ENCODE measurements at regions of chr19 and their contacts with region 1.

Region 1: DNA sequence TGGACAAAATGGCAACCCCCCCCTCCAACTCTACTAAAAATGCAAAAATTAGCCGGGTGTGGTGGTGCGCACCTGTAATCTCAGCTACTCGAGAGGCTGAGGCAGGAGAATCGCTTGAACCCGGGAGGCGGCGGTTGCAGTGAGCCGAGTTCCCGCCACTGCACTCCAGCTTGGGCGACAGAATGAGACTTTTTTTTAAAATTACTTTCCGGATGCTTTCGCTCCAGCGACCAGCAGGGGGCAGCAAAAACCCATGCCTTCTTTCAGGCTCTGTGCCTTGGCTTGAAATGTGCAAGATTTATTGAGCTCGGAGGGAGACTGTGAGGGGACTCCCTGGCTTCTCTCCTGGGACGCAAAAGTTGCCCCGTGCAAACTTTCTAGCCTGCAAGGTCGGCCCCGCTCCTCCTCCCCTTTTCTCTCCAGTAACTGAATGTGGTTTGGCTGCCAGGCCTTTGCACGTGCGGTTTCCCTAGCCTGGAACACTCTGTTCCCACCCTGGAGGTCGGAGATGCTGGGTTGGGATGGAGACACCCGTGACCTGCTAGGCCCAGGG is 61.4 kb upstream of the NFIC start:
- DNase-seq: peak; percentile 71
- H3K4me3 ChIP-seq: no peak overlapping the region
- H3K27ac ChIP-seq: no peak overlapping the region
- H3K4me1 ChIP-seq: no peaks in the 10 kb centered on the region
- H3K27me3 ChIP-seq: no peaks in the 10 kb centered on the region
- CTCF ChIP-seq: peak; percentile 66 to 77
- POLR2A ChIP-seq: no peak

Region 2: GRCh38 chr19:3193256-3194105 is 111.5 kb before region 1 on chr19:
- CTCF ChIA-PET with region 1: no interaction called
- POLR2A ChIA-PET with region 1: no interaction called
- dilution Hi-C with region 1: no loop called
- intact Hi-C with region 1: no loop called
- DNase-seq: no peak
- H3K4me3 ChIP-seq: no peak overlapping the region
- H3K27ac ChIP-seq: no peak overlapping the region
- H3K4me1 ChIP-seq: no peaks in the 10 kb centered on the region
- H3K27me3 ChIP-seq: no peaks in the 10 kb centered on the region
- CTCF ChIP-seq: no peak
- POLR2A ChIP-seq: no peak

Region 3: DNA sequence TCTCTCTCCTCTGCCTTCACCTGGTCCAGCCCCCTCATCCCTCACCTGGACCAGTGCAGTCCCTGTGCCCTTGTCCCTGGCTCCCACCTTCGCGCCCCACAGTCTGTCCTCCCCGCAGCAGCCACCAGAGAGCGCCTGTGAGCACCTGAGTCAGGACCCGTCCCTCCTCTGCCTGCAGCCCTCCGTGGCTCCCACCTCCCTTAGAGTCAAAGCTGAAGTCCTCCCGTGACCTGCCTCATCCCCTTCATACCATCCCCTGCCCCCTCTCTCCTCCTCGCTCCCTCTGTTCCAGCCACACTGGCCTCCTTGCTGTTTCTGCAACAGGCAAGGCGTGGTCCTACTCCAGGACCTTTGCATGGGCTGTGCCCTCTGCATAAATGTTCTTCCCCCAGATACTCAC is 70.1 kb before region 1 on chr19:
- CTCF ChIA-PET with region 1: interaction called, 3 read pairs
- POLR2A ChIA-PET with region 1: interaction called, 14 read pairs
- dilution Hi-C with region 1: no loop called
- intact Hi-C with region 1: no loop called
- DNase-seq: no peak
- H3K4me3 ChIP-seq: no peak overlapping the region
- H3K27ac ChIP-seq: no peak overlapping the region
- H3K4me1 ChIP-seq: no peaks in the 10 kb centered on the region
- H3K27me3 ChIP-seq: peaks cover 0 to 2% of the 10 kb centered on the region in 2 experiments
- CTCF ChIP-seq: peak in 1 of 2 donors; percentile 19
- POLR2A ChIP-seq: no peak

Region 4: DNA sequence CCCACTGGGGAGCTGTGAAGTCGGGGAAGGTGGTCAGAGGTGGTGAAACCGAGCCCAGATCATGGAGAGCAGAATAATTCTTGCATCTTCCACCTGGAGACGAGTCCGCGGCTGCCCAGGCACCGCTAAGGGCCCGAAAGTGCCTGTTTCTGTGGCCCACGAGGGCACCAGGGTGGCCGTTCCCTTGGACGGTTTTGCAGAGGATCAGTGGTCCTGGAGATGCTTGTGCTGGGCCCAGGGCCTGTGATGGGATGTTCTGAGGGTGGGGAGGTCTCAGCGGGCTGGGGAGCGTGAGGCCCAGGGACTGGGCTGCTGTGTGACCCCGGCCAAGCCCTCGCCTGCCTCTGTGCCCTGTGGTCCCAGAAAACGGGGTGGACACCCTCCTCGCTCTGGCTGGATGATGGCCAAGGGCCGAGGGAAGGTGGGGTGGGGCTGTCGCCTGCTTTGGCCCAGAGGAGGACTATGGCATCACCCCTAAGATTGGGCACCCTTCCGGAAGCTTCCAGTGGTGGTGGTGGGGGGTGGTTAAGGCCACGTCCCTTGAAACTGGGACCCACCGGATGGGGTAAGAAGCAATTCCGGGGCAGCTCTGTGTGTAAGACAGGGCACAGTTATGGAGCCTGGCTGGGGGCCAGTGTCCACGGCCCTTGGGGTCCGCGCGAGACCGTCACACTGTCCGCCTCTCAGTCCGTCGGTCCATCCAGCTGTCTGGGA is 10.2 kb after region 1 on chr19:
- CTCF ChIA-PET with region 1: interaction called, 10 read pairs
- POLR2A ChIA-PET with region 1: no interaction called
- dilution Hi-C with region 1: no loop called
- intact Hi-C with region 1: no loop called
- DNase-seq: no peak
- H3K4me3 ChIP-seq: no peak overlapping the region
- H3K27ac ChIP-seq: no peak overlapping the region
- H3K4me1 ChIP-seq: no peaks in the 10 kb centered on the region
- H3K27me3 ChIP-seq: peaks cover 0 to 4% of the 10 kb centered on the region in 2 experiments
- CTCF ChIP-seq: no peak
- POLR2A ChIP-seq: no peak

Region 5: DNA sequence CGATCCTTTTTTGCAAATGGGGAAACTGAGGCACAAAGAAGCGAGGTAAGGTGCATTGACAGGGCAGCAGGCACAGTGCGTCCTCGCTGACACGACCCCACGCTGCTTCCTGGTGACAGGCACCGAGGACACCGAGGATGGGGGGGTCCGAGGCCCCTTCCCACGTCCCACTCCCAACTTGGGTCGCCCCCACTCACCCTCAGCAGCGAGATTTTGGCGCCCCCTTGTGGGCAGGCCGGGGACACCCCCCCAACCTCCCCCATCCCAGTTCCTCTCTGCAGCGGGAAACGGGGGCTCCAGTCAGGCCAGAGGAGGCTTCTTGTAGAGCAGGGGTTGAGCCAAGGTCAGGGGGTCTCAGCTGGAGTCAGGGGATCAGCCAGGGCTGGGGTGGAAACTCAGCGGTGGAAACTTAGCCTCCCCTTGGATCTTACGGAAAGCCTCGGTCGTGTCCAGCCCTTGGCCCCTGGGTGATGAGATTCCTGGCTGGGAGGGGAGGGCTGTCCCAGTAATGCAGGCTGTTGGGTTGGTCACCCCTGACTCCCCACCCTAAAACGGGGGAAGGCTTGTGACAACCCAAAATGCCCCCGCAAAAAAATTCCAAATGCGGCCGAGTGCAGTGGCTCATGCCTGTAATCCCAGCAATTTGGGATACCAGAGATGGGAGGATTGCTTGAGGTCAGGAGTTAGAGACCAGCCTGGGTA is 167.2 kb after region 1 on chr19:
- CTCF ChIA-PET with region 1: interaction called, 34 read pairs
- POLR2A ChIA-PET with region 1: no interaction called
- dilution Hi-C with region 1: no loop called
- intact Hi-C with region 1: loop called (anchors 5 kb)
- DNase-seq: peak; percentile 29
- H3K4me3 ChIP-seq: no peak overlapping the region
- H3K27ac ChIP-seq: no peak overlapping the region
- H3K4me1 ChIP-seq: no peaks in the 10 kb centered on the region
- H3K27me3 ChIP-seq: no peaks in the 10 kb centered on the region
- CTCF ChIP-seq: peak; percentile 83 to 90
- POLR2A ChIP-seq: no peak

Region 6: DNA sequence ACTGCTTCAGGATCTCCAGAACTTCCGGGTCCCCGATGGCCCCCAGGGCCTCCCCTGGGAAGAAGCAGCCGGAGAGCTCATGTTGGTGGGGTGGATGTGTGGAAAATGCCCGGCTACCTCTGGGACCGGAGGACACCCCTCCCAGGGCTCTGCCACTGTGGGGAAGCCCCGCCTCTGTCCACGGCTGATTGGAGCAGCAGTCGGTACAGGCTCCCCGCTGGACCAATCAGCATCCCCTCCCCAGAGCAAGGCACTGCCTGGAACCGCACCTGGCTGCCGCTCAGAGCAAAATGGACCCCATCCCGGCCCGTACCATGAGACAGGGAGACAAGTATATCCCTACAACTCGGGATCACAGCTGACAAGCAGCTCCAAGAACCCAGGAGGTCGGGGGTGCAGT is 189.1 kb after region 1 on chr19:
- CTCF ChIA-PET with region 1: interaction called, 11 read pairs
- POLR2A ChIA-PET with region 1: no interaction called
- dilution Hi-C with region 1: no loop called
- intact Hi-C with region 1: no loop called
- DNase-seq: no peak
- H3K4me3 ChIP-seq: no peak overlapping the region
- H3K27ac ChIP-seq: no peak overlapping the region
- H3K4me1 ChIP-seq: no peaks in the 10 kb centered on the region
- H3K27me3 ChIP-seq: no peaks in the 10 kb centered on the region
- CTCF ChIP-seq: no peak
- POLR2A ChIP-seq: no peak

Measured in endothelial cell of umbilical vein (primary cell).